Activated CD4-positive, alpha-beta T cell treated with anti-CD3 and anti-CD28 coated beads, Interleukin-2, amount 10 ng/mL, durations not matched to agents 24 days and 14 days (primary cell): ENCODE measurements at regions of chr13 and their contacts with region 1.

Region 1: DNA sequence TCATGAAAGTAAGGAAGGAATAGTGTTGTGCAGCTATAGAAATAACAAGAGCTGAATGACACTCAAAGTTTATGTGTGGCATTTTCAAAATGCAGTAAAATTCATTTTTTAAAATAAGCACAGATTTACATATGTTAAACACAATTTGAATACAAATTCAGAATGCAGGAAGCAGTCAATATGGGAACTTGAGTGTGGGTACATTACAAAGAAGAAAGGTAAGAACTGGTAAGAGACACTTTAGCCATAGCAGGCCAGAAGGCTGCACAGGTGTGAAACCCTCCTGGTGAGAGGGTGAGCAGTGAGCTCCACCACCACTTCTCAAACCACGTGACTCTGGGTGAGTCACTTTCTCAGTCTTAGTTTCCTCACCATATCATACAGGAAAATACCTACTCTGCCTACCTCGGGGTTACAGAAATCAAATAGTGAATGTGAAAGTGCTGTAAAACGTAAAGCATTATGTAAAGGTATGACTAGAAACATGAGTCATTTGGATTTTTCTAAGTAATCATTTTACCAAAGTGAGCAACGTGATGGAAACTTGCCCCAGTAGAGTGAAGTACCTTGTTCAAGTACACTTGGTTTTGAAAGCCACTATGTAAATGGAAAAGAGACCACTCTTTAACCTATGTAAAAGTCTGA is 40.5 kb downstream of the USP12 start:
- DNase-seq: peak; percentile 94
- H3K4me3 Mint-ChIP-seq: peak overlapping the region; percentile 62
- H3K27ac Mint-ChIP-seq: peak overlapping the region; percentile 80
- H3K4me1 Mint-ChIP-seq: peaks cover 64% of the 10 kb centered on the region
- H3K27me3 Mint-ChIP-seq: no peaks in the 10 kb centered on the region

Region 2: GRCh38 chr13:27022571-27023311 is 108.4 kb before region 1 on chr13:
- intact Hi-C with region 1: loop called (anchors 1 kb)
- DNase-seq: no peak
- H3K4me3 Mint-ChIP-seq: no peak overlapping the region
- H3K27ac Mint-ChIP-seq: no peak overlapping the region
- H3K4me1 Mint-ChIP-seq: peaks cover 8% of the 10 kb centered on the region
- H3K27me3 Mint-ChIP-seq: peaks cover 5% of the 10 kb centered on the region

Region 3: DNA sequence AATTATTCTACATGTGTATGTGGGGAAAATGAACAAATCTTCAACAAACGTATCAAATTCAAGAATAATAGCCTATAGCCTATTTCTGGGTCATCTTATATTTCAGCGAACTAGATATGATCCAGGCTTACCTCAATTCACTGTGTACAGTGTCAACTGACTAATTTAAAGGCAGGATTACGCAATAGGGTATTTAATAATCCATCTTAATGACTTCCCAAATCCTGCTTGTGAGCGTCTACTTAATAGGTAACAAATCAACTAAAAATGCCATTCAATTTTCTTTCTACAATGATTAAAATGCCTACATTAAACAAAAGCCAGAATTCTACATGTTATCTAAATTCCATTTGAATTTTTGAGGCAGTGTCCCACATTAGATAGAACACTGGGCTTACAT is 26.5 kb before region 1 on chr13:
- intact Hi-C with region 1: no loop called
- DNase-seq: no peak
- H3K4me3 Mint-ChIP-seq: no peak overlapping the region
- H3K27ac Mint-ChIP-seq: no peak overlapping the region
- H3K4me1 Mint-ChIP-seq: peaks cover 12% of the 10 kb centered on the region
- H3K27me3 Mint-ChIP-seq: no peaks in the 10 kb centered on the region

Region 4: DNA sequence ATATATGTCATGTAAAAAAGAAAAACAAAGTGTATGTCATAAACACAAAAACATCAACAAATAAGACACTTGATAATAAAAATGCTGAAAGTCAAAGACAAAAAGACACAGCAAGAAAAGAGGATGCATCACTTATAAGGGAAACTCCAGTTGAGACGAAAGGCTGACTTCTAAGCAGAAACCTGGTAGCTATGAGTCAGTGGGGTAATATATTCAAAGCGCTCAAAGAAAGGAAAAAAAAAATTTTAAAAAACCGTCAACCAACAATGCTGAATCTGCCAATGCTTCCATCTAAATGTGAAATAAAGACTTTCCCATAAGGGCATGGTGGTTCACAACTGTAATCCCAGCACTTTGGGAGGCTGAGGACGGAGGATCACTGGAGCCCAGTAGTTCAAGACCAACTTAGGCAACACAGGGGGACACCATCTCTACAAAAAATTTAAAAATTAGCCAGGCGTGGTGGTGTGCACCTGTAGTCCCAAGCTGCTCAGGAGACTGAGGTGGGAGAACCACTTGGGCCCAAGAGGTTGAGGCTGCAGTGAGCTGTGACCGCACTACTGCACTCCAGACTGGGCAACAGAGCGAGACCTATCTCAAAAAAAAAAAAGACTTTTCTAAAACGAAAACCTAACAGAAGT is 16.5 kb after region 1 on chr13:
- intact Hi-C with region 1: loop called (anchors 1 kb)
- DNase-seq: no peak
- H3K4me3 Mint-ChIP-seq: peak overlapping the region; percentile 60
- H3K27ac Mint-ChIP-seq: peak overlapping the region; percentile 94
- H3K4me1 Mint-ChIP-seq: peaks cover 48% of the 10 kb centered on the region
- H3K27me3 Mint-ChIP-seq: no peaks in the 10 kb centered on the region

Region 5: GRCh38 chr13:27194895-27195764 is 64.0 kb after region 1 on chr13:
- intact Hi-C with region 1: loop called (anchors 2 kb)
- DNase-seq: no peak
- H3K4me3 Mint-ChIP-seq: peak overlapping the region; percentile 19
- H3K27ac Mint-ChIP-seq: peak overlapping the region; percentile 15
- H3K4me1 Mint-ChIP-seq: peaks cover 16% of the 10 kb centered on the region
- H3K27me3 Mint-ChIP-seq: peaks cover 2% of the 10 kb centered on the region

Region 6: GRCh38 chr13:27353166-27353583 is 222.1 kb after region 1 on chr13:
- intact Hi-C with region 1: loop called (anchors 2 kb)
- DNase-seq: peak; percentile 75
- H3K4me3 Mint-ChIP-seq: no peak overlapping the region
- H3K27ac Mint-ChIP-seq: no peak overlapping the region
- H3K4me1 Mint-ChIP-seq: peaks cover 7% of the 10 kb centered on the region
- H3K27me3 Mint-ChIP-seq: peaks cover 6% of the 10 kb centered on the region

Region 7: GRCh38 chr13:27449936-27450828 is 319.1 kb after region 1 on chr13 and contains the start of gene MTIF3:
- intact Hi-C with region 1: loop called (anchors 5 kb)
- DNase-seq: peak; percentile 99
- H3K4me3 Mint-ChIP-seq: peak within 1 kb of the TSS; percentile 88
- H3K27ac Mint-ChIP-seq: peak within 1 kb of the TSS; percentile 96
- H3K4me1 Mint-ChIP-seq: peaks cover 43% of the 10 kb centered on the region
- H3K27me3 Mint-ChIP-seq: no peaks in the 10 kb centered on the region
- total RNA-seq, gene MTIF3: 28.8 and 30.4 TPM in 2 replicates